A673 (cell line): ENCODE measurements at regions of chr1 and their contacts with region 1.

Region 1: DNA sequence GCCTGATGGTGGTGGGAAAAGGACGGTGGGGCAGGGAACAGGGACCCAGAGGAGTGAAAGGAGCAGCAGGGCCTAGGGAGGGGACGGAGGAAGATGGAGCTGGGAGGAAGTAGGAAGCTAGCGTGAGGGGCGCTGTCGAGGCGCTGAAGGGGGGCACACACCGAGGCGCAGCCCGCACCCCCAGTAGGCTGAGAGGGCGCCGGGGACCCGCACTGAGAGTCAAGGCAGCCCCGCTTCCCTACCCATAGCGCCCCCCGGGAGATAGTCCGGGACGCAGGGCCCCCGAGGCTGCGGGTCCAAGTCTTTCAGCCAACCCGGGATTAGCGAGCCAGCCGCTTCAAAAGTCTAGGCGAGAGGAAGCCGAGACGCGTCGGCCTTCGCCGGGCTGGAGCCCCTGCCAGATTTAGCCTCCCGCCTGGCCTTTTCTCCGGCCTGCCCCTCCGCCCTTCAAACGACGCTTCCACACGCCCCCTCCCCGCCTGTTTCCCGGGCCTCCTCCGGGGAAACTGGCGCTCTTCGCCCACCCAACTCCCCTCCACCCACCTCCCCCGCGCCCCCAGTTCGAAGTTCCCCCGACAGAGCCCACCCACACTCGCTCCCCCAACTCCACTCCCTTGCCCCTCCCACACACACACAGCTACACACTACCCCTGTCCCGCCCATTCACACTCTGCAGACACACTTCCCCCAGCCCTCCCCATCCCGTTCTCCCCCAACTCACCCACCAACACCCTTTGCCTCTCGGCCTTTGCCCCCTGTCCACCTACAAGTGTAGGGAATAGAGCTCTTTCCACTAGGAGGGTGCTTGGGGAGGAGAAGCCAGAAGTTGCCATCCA is 7.8 kb upstream of the PROX1 start:
- DNase-seq: no peak
- H3K4me3 ChIP-seq: no peak overlapping the region
- H3K27ac ChIP-seq: no peak overlapping the region
- H3K4me1 ChIP-seq: peaks cover 8% of the 10 kb centered on the region
- H3K27me3 ChIP-seq: peaks cover 94% of the 10 kb centered on the region
- CTCF ChIP-seq: 0 out of 2 replicates have a peak, but pooled peaks have one; percentile 15

Region 2: DNA sequence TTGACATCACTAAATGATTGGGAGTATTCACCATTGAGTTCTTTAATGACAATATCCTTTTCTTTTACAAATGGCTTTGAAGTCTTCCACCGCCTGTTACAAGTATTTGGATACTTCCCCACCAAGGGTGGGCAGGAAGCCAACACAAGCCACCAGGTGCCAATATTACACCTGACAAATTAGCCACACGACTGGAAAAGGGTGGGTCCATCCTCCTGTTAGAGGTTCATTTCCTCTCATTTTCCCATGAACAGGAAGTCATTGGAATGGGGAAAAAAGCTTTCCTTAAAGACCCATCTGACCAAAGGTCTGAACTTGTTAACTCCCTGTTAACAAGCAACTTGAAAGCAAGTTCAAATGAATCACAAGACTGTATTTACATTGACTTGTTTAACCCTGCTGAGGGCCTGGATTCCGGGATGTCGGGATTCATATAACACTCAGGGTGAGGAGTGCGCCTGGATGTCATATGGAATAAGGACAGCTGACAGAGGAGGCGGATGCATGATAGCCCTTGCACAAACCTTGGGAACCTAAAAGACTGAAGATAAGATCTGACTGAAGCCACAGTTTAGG is 32.7 kb before region 1 on chr1:
- CTCF ChIA-PET with region 1: interaction called, 12 read pairs
- POLR2A ChIA-PET with region 1: interaction called, 5 read pairs
- intact Hi-C with region 1: no loop called
- DNase-seq: no peak
- H3K4me3 ChIP-seq: no peak overlapping the region
- H3K27ac ChIP-seq: no peak overlapping the region
- H3K4me1 ChIP-seq: no peaks in the 10 kb centered on the region
- H3K27me3 ChIP-seq: peaks cover 62% of the 10 kb centered on the region
- CTCF ChIP-seq: no peak

Region 3: DNA sequence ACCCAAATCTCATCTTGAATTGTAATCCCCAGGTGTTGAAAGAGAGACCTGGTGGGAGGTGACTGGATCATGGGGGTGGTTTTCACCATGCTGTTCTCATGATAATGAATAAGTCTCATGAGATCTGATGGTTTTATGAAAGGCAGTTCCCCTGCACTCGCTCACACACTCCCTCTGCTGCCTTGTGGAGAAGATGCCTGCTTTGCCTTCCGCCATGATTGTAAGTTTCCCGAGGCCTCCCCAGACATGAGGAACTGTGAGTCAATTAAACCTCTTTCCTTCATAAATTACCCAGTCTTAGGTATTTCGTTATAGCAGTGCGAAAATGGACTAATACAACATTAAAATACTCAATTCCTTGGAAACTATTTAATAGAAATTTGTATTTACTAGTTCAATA is 107.0 kb after region 1 on chr1:
- CTCF ChIA-PET with region 1: no interaction called
- POLR2A ChIA-PET with region 1: no interaction called
- intact Hi-C with region 1: no loop called
- DNase-seq: no peak
- H3K4me3 ChIP-seq: no peak overlapping the region
- H3K27ac ChIP-seq: no peak overlapping the region
- H3K4me1 ChIP-seq: no peaks in the 10 kb centered on the region
- H3K27me3 ChIP-seq: peaks cover 4% of the 10 kb centered on the region
- CTCF ChIP-seq: 0 out of 2 replicates have a peak, but pooled peaks have one; percentile 9

Region 4: GRCh38 chr1:215045698-215046308 is 1065.8 kb after region 1 on chr1:
- CTCF ChIA-PET with region 1: no interaction called
- POLR2A ChIA-PET with region 1: no interaction called
- intact Hi-C with region 1: no loop called
- DNase-seq: no peak
- H3K4me3 ChIP-seq: no peak overlapping the region
- H3K27ac ChIP-seq: no peak overlapping the region
- H3K4me1 ChIP-seq: no peaks in the 10 kb centered on the region
- H3K27me3 ChIP-seq: peaks cover 11% of the 10 kb centered on the region
- CTCF ChIP-seq: no peak